OCI-LY7 (cell line): ENCODE measurements at regions of chr1 and their contacts with region 1.

Region 1: GRCh38 chr1:167599957-167600581 is 30.0 kb upstream of the RCSD1 start:
- DNase-seq: peak; percentile 80
- H3K4me3 ChIP-seq: peak overlapping the region; percentile 10
- H3K27ac ChIP-seq: peak overlapping the region; percentile 79
- H3K4me1 ChIP-seq: peaks cover 40% of the 10 kb centered on the region
- CTCF ChIP-seq: peak; percentile 97

Region 2: GRCh38 chr1:167409183-167409582 is 190.9 kb before region 1 on chr1:
- CTCF ChIA-PET with region 1: no interaction called
- POLR2A ChIA-PET with region 1: no interaction called
- intact Hi-C with region 1: no loop called
- DNase-seq: peak; percentile 59
- H3K4me3 ChIP-seq: no peak overlapping the region
- H3K27ac ChIP-seq: no peak overlapping the region
- H3K4me1 ChIP-seq: peaks cover 4% of the 10 kb centered on the region
- CTCF ChIP-seq: peak; percentile 79

Region 3: GRCh38 chr1:167617153-167618147 is 17.4 kb after region 1 on chr1:
- CTCF ChIA-PET with region 1: interaction called, 12 read pairs
- POLR2A ChIA-PET with region 1: interaction called, 66 read pairs
- intact Hi-C with region 1: loop called (anchors 1 kb)
- DNase-seq: peak; percentile 98
- H3K4me3 ChIP-seq: peak overlapping the region; percentile 68
- H3K27ac ChIP-seq: peak overlapping the region; percentile 96
- H3K4me1 ChIP-seq: peaks cover 83% of the 10 kb centered on the region
- CTCF ChIP-seq: no peak

Region 4: GRCh38 chr1:167635156-167635648 is 35.1 kb after region 1 on chr1:
- CTCF ChIA-PET with region 1: interaction called, 12 read pairs
- POLR2A ChIA-PET with region 1: interaction called, 34 read pairs
- intact Hi-C with region 1: loop called (anchors 1 kb)
- DNase-seq: no peak
- H3K4me3 ChIP-seq: peak overlapping the region; percentile 21
- H3K27ac ChIP-seq: peak overlapping the region; percentile 54
- H3K4me1 ChIP-seq: peaks cover 66% of the 10 kb centered on the region
- CTCF ChIP-seq: no peak

Region 5: GRCh38 chr1:167687919-167688519 is 88.0 kb after region 1 on chr1:
- CTCF ChIA-PET with region 1: interaction called, 22 read pairs
- POLR2A ChIA-PET with region 1: interaction called, 6 read pairs
- intact Hi-C with region 1: loop called (anchors 1 kb)
- DNase-seq: peak; percentile 86
- H3K4me3 ChIP-seq: no peak overlapping the region
- H3K27ac ChIP-seq: peak overlapping the region; percentile 52
- H3K4me1 ChIP-seq: peaks cover 23% of the 10 kb centered on the region
- CTCF ChIP-seq: peak; percentile 98

Region 6: DNA sequence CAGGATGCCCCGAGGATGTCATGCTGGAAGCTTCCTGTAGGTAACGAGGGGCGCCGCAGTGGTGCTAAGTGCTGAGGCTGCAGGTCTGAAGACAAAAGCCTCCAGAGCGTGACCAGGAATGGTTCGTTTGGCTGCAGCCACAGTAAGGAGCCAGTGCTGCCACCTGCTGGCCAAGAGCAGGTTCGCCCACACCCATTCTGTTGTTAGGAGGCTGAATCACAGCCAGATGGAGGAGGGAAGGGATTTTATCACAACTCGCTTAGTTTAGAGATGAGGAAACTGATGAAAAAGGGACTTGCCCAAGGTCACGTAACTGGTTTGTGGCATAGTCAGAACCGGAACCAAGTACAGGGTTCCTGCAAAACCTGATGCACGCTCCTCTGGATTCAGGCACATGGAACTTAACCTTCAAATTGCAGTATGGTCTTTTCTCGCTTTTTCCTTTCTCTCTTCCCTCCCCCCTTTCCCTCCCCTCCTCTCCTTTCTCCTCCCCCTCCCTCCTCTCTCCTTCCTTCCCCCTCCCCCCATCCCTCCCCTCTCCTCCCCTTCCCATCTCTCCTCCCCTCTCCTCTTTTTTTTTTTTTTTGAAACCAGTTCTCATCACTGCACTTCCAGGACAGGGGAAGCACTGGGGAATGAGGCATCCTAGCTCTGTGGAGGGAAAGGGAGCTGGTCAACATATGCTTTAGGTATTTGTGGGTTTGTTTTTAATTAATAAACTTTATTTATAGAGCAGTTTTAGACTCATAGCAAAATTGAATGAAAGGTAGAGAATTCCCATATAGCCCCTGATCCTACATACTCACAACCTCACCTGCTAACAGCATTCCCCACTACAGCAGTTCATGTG is 203.5 kb after region 1 on chr1:
- CTCF ChIA-PET with region 1: no interaction called
- POLR2A ChIA-PET with region 1: interaction called, 3 read pairs
- intact Hi-C with region 1: loop called (anchors 1 kb)
- DNase-seq: peak; percentile 96
- H3K4me3 ChIP-seq: no peak overlapping the region
- H3K27ac ChIP-seq: no peak overlapping the region
- H3K4me1 ChIP-seq: peaks cover 17% of the 10 kb centered on the region
- CTCF ChIP-seq: peak; percentile 98